CD8-positive, alpha-beta T cell (primary cell): ENCODE measurements at regions of chr3 and their contacts with region 1.

Region 1: DNA sequence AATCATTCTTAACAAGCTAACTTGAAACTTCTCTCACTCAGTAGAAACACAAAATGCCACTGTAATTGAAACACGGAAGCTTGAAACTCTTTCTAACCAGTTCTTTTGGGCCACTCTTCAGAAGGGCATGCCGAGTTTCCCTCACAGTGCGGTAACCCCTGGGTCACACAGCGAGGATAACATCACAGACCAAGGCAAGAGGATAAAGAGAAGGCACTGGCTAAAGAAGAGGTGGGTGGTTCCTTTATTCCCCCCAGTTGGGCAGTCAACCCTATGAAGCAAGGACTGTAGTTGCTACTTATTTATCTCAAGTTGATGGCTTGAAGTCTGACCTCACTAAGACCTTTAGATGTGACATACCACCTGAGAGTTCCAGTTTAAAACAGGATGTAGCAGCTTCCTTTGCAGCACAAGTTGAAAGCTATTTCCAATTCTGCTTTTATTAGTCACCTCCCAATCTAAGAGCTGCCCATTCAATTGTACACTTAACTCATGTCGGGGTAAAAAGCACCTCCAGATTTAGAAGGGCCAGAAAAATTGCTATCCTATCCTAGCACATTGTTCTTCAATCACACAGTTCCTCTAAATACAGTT is 272.4 kb downstream of the TIGIT start:
- DNase-seq: no peak
- ATAC-seq: no peak
- H3K4me3 ChIP-seq: no peak overlapping the region
- H3K4me3 Mint-ChIP-seq: no peak overlapping the region
- H3K27ac ChIP-seq: no peak overlapping the region
- H3K27ac Mint-ChIP-seq: no peak overlapping the region
- H3K4me1 ChIP-seq: no peaks in the 10 kb centered on the region
- H3K4me1 Mint-ChIP-seq: peaks cover 8% of the 10 kb centered on the region
- H3K27me3 ChIP-seq: no peaks in the 10 kb centered on the region
- H3K27me3 Mint-ChIP-seq: no peaks in the 10 kb centered on the region
- CTCF ChIP-seq: no peak

Region 2: GRCh38 chr3:113721636-113722035 is 844.6 kb before region 1 on chr3:
- CTCF ChIA-PET with region 1: no interaction called
- POLR2A ChIA-PET with region 1: no interaction called
- intact Hi-C with region 1: no loop called
- DNase-seq: no peak
- ATAC-seq: no peak
- H3K4me3 ChIP-seq: no peak overlapping the region
- H3K4me3 Mint-ChIP-seq: no peak overlapping the region
- H3K27ac ChIP-seq: no peak overlapping the region
- H3K27ac Mint-ChIP-seq: no peak overlapping the region
- H3K4me1 ChIP-seq: no peaks in the 10 kb centered on the region
- H3K4me1 Mint-ChIP-seq: peaks cover 20% of the 10 kb centered on the region
- H3K27me3 ChIP-seq: no peaks in the 10 kb centered on the region
- H3K27me3 Mint-ChIP-seq: no peaks in the 10 kb centered on the region
- CTCF ChIP-seq: no peak

Region 3: GRCh38 chr3:114144909-114145647 is 421.2 kb before region 1 on chr3:
- CTCF ChIA-PET with region 1: no interaction called
- POLR2A ChIA-PET with region 1: no interaction called
- intact Hi-C with region 1: loop called in 1 of 2 experiments (anchors 10 kb)
- DNase-seq: no peak
- ATAC-seq: no peak
- H3K4me3 ChIP-seq: no peak overlapping the region
- H3K4me3 Mint-ChIP-seq: no peak overlapping the region
- H3K27ac ChIP-seq: no peak overlapping the region
- H3K27ac Mint-ChIP-seq: no peak overlapping the region
- H3K4me1 ChIP-seq: no peaks in the 10 kb centered on the region
- H3K4me1 Mint-ChIP-seq: no peaks in the 10 kb centered on the region
- H3K27me3 ChIP-seq: no peaks in the 10 kb centered on the region
- H3K27me3 Mint-ChIP-seq: no peaks in the 10 kb centered on the region
- CTCF ChIP-seq: no peak

Region 4: DNA sequence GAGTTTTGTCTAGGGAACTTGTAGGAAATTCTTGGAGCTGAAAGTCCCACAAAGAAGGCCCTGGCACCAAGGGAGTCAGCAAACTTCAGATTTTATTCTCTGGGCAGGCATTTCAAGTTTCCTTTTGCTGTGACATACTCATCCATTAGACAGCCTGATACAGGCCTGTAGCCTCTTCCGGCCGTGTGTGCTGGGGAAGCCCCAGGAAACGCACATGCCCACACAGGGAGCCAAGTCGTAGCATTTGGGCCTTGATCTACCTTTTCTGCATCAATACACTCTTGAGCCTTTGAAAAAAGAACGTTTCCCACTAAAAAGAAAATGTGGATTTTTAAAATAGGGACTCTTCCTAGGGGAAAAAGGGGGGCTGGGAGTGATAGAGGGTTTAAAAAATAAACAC is 257.4 kb before region 1 on chr3:
- CTCF ChIA-PET with region 1: no interaction called
- POLR2A ChIA-PET with region 1: no interaction called
- intact Hi-C with region 1: no loop called
- DNase-seq: peak; percentile 14 to 88 (median 51)
- ATAC-seq: peak; percentile 82
- H3K4me3 ChIP-seq: no peak overlapping the region
- H3K4me3 Mint-ChIP-seq: peak overlapping the region; percentile 38
- H3K27ac ChIP-seq: peak overlapping the region; percentile 55 to 91
- H3K27ac Mint-ChIP-seq: peak overlapping the region; percentile 87
- H3K4me1 ChIP-seq: peaks cover 30% of the 10 kb centered on the region
- H3K4me1 Mint-ChIP-seq: peaks cover 56% of the 10 kb centered on the region
- H3K27me3 ChIP-seq: no peaks in the 10 kb centered on the region
- H3K27me3 Mint-ChIP-seq: no peaks in the 10 kb centered on the region
- CTCF ChIP-seq: no peak

Region 5: GRCh38 chr3:114627770-114628169 is 61.5 kb after region 1 on chr3:
- CTCF ChIA-PET with region 1: no interaction called
- POLR2A ChIA-PET with region 1: no interaction called
- intact Hi-C with region 1: no loop called
- DNase-seq: no peak
- ATAC-seq: no peak
- H3K4me3 ChIP-seq: no peak overlapping the region
- H3K4me3 Mint-ChIP-seq: no peak overlapping the region
- H3K27ac ChIP-seq: no peak overlapping the region
- H3K27ac Mint-ChIP-seq: no peak overlapping the region
- H3K4me1 ChIP-seq: no peaks in the 10 kb centered on the region
- H3K4me1 Mint-ChIP-seq: peaks cover 4% of the 10 kb centered on the region
- H3K27me3 ChIP-seq: no peaks in the 10 kb centered on the region
- H3K27me3 Mint-ChIP-seq: no peaks in the 10 kb centered on the region
- CTCF ChIP-seq: no peak

Region 6: GRCh38 chr3:115595611-115596275 is 1029.5 kb after region 1 on chr3:
- CTCF ChIA-PET with region 1: no interaction called
- POLR2A ChIA-PET with region 1: no interaction called
- intact Hi-C with region 1: no loop called
- DNase-seq: no peak
- ATAC-seq: no peak
- H3K4me3 ChIP-seq: no peak overlapping the region
- H3K4me3 Mint-ChIP-seq: no peak overlapping the region
- H3K27ac ChIP-seq: no peak overlapping the region
- H3K27ac Mint-ChIP-seq: no peak overlapping the region
- H3K4me1 ChIP-seq: no peaks in the 10 kb centered on the region
- H3K4me1 Mint-ChIP-seq: no peaks in the 10 kb centered on the region
- H3K27me3 ChIP-seq: no peaks in the 10 kb centered on the region
- H3K27me3 Mint-ChIP-seq: peaks cover 6% of the 10 kb centered on the region
- CTCF ChIP-seq: no peak